WTC11 (cell line): ENCODE measurements at regions of chr12 and their contacts with region 1.

Region 1: DNA sequence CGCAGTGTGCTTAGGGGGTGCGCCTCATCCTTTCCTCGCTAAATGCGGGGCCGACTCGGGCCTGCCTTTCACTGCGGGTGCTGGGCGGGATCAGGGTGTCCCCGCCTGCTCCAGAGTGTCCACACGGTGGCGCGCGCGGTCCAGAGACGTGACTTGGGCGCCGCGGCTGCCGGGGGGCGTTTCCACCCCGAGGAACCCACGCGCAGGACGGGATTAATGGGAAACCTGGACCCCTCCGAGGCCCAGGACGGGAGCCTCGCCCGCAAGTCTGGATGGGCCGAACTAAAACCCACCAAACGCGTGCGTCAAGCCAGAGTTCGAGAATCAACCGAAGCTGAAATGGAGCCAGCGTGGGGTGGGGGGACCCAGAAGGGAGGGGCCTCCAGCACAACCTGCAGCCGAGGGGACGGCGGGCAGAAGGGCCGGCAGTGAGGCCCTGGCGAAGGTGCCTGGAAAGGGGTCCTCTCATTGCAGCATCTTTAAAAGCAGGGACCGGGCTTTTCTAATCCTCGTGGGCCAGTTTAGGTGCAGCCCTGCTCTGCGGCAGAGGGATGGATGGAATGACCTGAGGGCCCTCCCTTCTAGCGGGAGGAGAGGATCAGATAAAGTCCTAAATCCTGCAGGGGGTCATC is 93.3 kb downstream of the NINJ2 start:
- DNase-seq: peak; percentile 88
- ATAC-seq: peak; percentile 73
- H3K4me3 Mint-ChIP-seq: peak overlapping the region; percentile 79
- H3K27ac Mint-ChIP-seq: no peak overlapping the region
- H3K4me1 Mint-ChIP-seq: peaks cover 10% of the 10 kb centered on the region
- H3K27me3 Mint-ChIP-seq: peaks cover 15% of the 10 kb centered on the region
- CTCF ChIP-seq: peak; percentile 72

Region 2: GRCh38 chr12:810671-811415 is 240.9 kb after region 1 on chr12:
- CTCF ChIA-PET with region 1: interaction called, 29 read pairs
- POLR2A ChIA-PET with region 1: no interaction called
- DNase-seq: no peak
- ATAC-seq: no peak
- H3K4me3 Mint-ChIP-seq: no peak overlapping the region
- H3K27ac Mint-ChIP-seq: 0 out of 2 replicates have a peak overlapping the region, but pooled peaks have one; percentile 13
- H3K4me1 Mint-ChIP-seq: peaks cover 35% of the 10 kb centered on the region
- H3K27me3 Mint-ChIP-seq: no peaks in the 10 kb centered on the region
- CTCF ChIP-seq: no peak